ENCODE measurements at regions of chr17 and their contacts with region 1.

Region 1: GRCh38 chr17:36755586-36755985 is 154.2 kb downstream of the MRM1 start:
- DNase-seq: peak; percentile 41 to 83
- H3K4me3 ChIP-seq: no peak overlapping the region
- H3K27ac ChIP-seq: no peak overlapping the region
- H3K4me1 ChIP-seq: peaks cover 0 to 5% (median 0%) of the 10 kb centered on the region in 4 experiments; a peak in 2 of 7 replicates
- H3K27me3 ChIP-seq: no peaks in the 10 kb centered on the region
- CTCF ChIP-seq: peak; percentile 84 to 91 (median 88)
- EP300 ChIP-seq: no peak
- POLR2A ChIP-seq: no peak
- RAD21 ChIP-seq: peak; percentile 84 to 87

Region 2: DNA sequence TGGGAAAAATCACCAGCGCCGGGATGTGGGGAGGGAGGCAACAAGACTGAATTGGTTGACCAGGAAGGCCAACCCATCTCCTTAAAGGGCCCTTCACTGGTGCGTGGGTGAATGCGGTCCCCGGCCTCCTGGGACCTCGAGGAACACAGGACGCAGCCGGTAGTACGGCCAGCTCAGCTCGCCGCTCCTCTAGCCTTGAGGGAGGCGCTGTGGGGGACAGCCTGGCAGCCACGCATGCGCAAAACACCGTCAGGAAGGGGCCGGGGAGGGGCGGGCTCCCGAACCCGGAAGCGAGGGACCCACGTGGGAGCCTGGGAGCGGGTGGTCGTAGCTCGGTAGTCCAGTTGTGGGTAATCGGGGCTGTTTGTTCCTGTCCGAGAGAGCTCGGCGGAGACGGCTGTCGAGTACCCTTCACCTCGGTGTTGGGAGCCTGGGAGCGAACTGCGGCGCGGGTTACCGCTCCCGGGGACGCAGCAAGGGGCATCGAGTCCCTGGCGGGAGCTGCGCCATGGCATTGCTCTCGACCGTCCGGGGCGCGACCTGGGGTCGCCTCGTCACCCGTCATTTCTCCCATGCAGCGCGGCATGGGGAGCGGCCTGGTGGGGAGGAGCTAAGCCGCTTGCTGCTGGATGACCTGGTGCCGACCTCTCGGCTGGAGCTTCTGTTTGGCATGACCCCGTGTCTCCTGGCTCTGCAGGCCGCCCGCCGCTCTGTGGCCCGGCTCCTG is 154.1 kb before region 1 on chr17 and contains the start of gene MRM1:
- CTCF ChIA-PET with region 1: interaction called, 10 read pairs
- POLR2A ChIA-PET with region 1: no interaction called
- DNase-seq: peak; percentile 90 to 93
- H3K4me3 ChIP-seq: peak within 1 kb of the TSS; percentile 75 to 94 (median 86)
- H3K27ac ChIP-seq: peak within 1 kb of the TSS; percentile 57; the same call in 1 of the 2 replicates
- H3K4me1 ChIP-seq: peaks cover 3 to 15% (median 9%) of the 10 kb centered on the region in 4 experiments
- H3K27me3 ChIP-seq: no peaks in the 10 kb centered on the region
- CTCF ChIP-seq: no peak; a peak in 1 of 4 replicates
- EP300 ChIP-seq: no peak
- POLR2A ChIP-seq: peak; percentile 34 to 84
- RAD21 ChIP-seq: no peak
- total RNA-seq, gene MRM1: 11.2 and 11.7 TPM in 2 replicates

Region 3: DNA sequence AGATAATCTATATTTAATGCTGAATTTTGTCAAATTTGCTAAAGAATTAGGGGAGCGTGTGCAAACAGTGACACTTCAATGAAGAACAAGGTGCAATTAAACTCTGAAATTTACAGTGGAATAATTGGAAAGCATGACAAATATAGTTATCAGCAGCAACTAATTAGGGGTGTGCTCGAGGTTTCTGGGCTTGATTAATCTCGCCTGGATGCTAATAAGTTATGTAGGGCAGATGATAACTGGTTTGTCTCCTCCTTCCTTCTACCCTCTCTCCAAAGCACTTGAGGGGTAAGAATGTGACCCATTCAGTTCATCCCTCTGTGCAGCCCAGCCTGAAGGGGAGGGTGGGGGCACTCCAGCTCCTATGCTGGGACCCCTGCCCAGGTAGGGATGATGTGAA is 132.3 kb before region 1 on chr17:
- CTCF ChIA-PET with region 1: interaction called, 38 read pairs
- POLR2A ChIA-PET with region 1: interaction called, 3 read pairs
- DNase-seq: no peak
- H3K4me3 ChIP-seq: no peak overlapping the region
- H3K27ac ChIP-seq: no peak overlapping the region
- H3K4me1 ChIP-seq: peaks cover 0 to 9% (median 3%) of the 10 kb centered on the region in 4 experiments; a peak in 5 of 7 replicates
- H3K27me3 ChIP-seq: no peaks in the 10 kb centered on the region
- CTCF ChIP-seq: no peak
- EP300 ChIP-seq: no peak
- POLR2A ChIP-seq: no peak
- RAD21 ChIP-seq: no peak

Region 4: GRCh38 chr17:36657763-36658490 is 97.7 kb before region 1 on chr17:
- CTCF ChIA-PET with region 1: interaction called, 19 read pairs
- POLR2A ChIA-PET with region 1: interaction called, 4 read pairs
- DNase-seq: peak in 1 of 2 experiments; percentile 86
- H3K4me3 ChIP-seq: peak overlapping the region; percentile 44 to 81 (median 66)
- H3K27ac ChIP-seq: no peak overlapping the region
- H3K4me1 ChIP-seq: peaks cover 0 to 4% (median 3%) of the 10 kb centered on the region in 4 experiments; a peak in 3 of 7 replicates
- H3K27me3 ChIP-seq: peaks cover 0 to 10% (median 3%) of the 10 kb centered on the region in 4 experiments; a peak in 3 of 7 replicates
- CTCF ChIP-seq: peak; percentile 69 to 76 (median 74)
- EP300 ChIP-seq: 0 out of 3 replicates have a peak, but pooled peaks of 1 of the 2 experiments have one; percentile 17
- POLR2A ChIP-seq: no peak
- RAD21 ChIP-seq: peak; percentile 69 to 78

Region 5: DNA sequence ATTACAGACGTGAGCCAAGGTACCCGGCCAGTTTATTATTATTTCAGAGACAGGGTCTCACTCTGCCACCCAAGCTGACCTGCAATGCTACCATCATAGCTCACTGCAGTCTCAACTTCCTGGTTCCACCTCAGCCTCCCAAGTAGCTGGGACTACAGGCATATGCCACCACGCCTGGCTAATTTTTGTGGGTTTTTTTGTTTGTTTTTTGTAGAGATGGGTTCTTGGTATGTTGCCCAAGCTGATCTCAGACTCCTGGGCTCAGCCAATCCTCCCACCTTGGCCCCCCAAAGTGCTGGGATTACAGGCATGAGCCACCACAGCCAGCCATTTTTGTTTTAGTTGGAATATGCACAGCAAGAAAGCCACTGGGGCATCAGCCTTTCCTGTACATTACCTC is 38.5 kb before region 1 on chr17:
- CTCF ChIA-PET with region 1: interaction called, 10 read pairs
- POLR2A ChIA-PET with region 1: no interaction called
- DNase-seq: no peak
- H3K4me3 ChIP-seq: no peak overlapping the region
- H3K27ac ChIP-seq: no peak overlapping the region
- H3K4me1 ChIP-seq: peaks cover 3 to 6% (median 6%) of the 10 kb centered on the region in 4 experiments; a peak in 4 of 7 replicates
- H3K27me3 ChIP-seq: no peaks in the 10 kb centered on the region
- CTCF ChIP-seq: no peak
- EP300 ChIP-seq: no peak
- POLR2A ChIP-seq: no peak
- RAD21 ChIP-seq: no peak

Region 6: DNA sequence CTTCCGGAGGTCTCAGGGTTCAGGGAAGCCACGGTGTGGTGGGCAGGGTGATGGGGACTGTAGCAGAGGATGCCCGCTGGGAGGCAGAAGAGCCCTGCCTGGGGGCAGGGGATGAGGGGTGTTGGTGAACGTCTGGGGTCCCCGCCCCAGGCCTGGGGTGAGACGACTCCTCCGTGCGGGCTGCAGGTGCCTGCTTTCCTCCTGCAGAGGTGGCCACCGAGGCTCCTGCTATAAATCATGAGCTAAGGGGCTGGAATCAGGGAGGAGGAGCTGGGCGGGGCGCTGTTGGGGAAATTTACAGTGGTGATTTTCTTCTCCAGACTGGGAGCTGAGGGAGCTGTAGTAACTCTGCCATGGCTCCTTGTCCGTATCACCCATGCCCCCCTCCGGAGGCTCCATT is 12.8 kb after region 1 on chr17:
- CTCF ChIA-PET with region 1: interaction called, 19 read pairs
- POLR2A ChIA-PET with region 1: interaction called, 5 read pairs
- DNase-seq: peak in 1 of 2 experiments; percentile 70
- H3K4me3 ChIP-seq: no peak overlapping the region
- H3K27ac ChIP-seq: no peak overlapping the region
- H3K4me1 ChIP-seq: peaks cover 0 to 23% (median 10%) of the 10 kb centered on the region in 4 experiments
- H3K27me3 ChIP-seq: no peaks in the 10 kb centered on the region; a peak in 2 of 7 replicates
- CTCF ChIP-seq: peak; percentile 50 to 72 (median 62)
- EP300 ChIP-seq: no peak
- POLR2A ChIP-seq: no peak
- RAD21 ChIP-seq: peak; percentile 80 to 81

Region 7: DNA sequence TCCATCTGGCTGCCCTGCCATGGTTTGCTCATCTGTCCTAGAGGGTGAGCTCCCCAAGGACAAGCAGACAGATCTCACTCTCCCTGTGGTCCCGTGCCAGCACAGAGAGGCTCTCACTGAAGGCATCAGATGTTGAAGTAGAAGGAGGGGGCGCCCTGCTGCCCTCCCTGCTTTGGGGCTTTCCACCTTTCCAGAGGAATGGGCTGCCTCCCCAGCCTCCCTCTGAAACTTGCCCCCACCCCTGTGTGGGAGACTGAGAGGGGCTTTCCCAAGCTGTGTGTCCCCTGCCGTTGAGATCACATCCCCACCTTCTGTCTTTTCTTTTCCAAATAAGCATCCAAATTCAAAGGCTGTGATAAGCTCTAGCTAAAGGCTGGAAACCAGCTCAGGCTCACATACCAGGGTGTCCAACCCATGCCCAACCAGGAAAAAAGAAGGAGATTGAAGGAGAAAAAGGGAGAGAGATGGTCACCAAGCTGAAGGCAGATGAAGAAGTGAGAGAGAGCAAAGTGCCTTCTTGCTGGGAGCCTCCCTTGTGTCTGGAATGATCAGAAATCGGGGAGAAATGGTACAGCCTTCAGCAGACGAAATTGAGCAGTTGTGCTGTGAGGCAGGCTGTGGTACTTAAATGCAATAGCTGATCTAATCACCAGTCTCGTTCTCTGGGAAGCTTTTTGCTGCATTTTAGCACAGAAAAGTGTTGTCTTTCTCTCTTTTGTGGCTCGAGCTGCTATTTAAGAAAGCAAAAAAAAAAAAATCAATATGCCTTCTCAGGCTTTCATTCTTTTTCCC is 35.8 kb after region 1 on chr17:
- CTCF ChIA-PET with region 1: interaction called, 13 read pairs
- POLR2A ChIA-PET with region 1: no interaction called
- DNase-seq: no peak
- H3K4me3 ChIP-seq: peak overlapping the region in 1 of 4 experiments; percentile 20; a peak in 2 of 8 replicates
- H3K27ac ChIP-seq: peak overlapping the region; percentile 30; the same call in 1 of the 2 replicates
- H3K4me1 ChIP-seq: peaks cover 6 to 14% (median 10%) of the 10 kb centered on the region in 4 experiments
- H3K27me3 ChIP-seq: no peaks in the 10 kb centered on the region; a peak in 1 of 7 replicates
- CTCF ChIP-seq: no peak
- EP300 ChIP-seq: peak in 1 of 2 experiments; percentile 33; a peak in 1 of 3 replicates
- POLR2A ChIP-seq: no peak; a peak in 1 of 3 replicates
- RAD21 ChIP-seq: no peak

Measured in H1 (cell line).